Kidney (tissue), 22 donors: ENCODE measurements at regions of chr3 and their contacts with region 1.

Region 1: GRCh38 chr3:149519912-149520311 is 45.4 kb downstream of the TM4SF4 start:
- DNase-seq: no peak
- H3K4me3 ChIP-seq: no peak overlapping the region
- H3K27ac ChIP-seq: no peak overlapping the region
- H3K4me1 ChIP-seq: no peaks in the 10 kb centered on the region
- H3K27me3 ChIP-seq: no peaks in the 10 kb centered on the region
- CTCF ChIP-seq: no peak

Region 2: GRCh38 chr3:149723781-149724180 is 203.9 kb after region 1 on chr3:
- intact Hi-C with region 1: loop called (anchors 5 kb)
- DNase-seq: no peak
- H3K4me3 ChIP-seq: no peak overlapping the region
- H3K27ac ChIP-seq: no peak overlapping the region
- H3K4me1 ChIP-seq: no peaks in the 10 kb centered on the region
- H3K27me3 ChIP-seq: no peaks in the 10 kb centered on the region
- CTCF ChIP-seq: no peak

Region 3: DNA sequence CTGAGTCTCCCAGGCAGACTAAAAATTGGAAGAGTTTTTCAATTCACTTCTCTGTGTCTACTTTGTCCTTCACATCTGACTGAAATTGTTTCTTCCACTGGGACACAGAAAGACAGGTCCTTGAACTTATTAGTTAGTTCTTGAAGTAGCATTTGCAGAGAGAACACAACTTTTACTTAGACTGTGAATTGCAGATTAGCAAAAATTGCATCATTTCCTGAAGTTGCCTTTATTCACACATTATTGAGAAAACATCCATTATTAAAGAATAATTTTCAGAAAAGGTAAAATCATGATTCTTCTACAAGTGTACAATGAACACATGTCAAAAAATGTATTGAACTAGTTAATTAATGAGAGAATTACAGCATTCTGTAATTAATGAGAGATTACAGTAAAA is 233.8 kb after region 1 on chr3:
- intact Hi-C with region 1: no loop called
- DNase-seq: no peak
- H3K4me3 ChIP-seq: no peak overlapping the region
- H3K27ac ChIP-seq: no peak overlapping the region
- H3K4me1 ChIP-seq: peaks cover 0 to 7% (median 0%) of the 10 kb centered on the region in 3 donors
- H3K27me3 ChIP-seq: no peaks in the 10 kb centered on the region
- CTCF ChIP-seq: no peak

Region 4: DNA sequence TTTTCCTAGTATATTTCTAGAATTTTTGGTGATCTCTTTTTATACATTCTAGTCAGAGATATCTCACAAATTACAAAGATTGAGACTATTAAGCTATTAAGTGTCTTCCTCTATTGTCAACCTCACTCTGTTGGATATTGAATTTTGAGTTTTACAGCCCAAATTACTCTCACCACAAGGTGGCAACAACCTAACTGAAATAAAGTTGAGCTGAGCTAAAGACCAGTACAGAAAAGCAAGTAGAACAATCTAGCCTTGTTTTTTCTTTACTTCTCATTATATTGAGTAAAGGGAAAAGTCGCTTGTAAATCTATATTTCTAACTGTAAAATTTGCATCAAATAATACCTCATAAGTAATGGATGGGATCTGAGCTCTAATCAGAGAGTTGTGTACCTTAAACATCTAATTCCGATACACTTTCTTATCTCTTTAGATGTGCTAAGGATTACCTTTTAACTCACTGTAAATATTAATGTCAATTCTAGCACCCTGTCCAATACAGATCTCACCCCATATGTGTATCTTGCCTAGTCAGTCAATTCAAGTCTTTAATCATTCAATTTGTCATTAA is 245.9 kb after region 1 on chr3:
- intact Hi-C with region 1: no loop called
- DNase-seq: peak in 2 of 5 donors; percentile 29 to 41
- H3K4me3 ChIP-seq: no peak overlapping the region
- H3K27ac ChIP-seq: no peak overlapping the region
- H3K4me1 ChIP-seq: no peaks in the 10 kb centered on the region
- H3K27me3 ChIP-seq: peaks cover 4% of the 10 kb centered on the region
- CTCF ChIP-seq: peak; percentile 51

Region 5: DNA sequence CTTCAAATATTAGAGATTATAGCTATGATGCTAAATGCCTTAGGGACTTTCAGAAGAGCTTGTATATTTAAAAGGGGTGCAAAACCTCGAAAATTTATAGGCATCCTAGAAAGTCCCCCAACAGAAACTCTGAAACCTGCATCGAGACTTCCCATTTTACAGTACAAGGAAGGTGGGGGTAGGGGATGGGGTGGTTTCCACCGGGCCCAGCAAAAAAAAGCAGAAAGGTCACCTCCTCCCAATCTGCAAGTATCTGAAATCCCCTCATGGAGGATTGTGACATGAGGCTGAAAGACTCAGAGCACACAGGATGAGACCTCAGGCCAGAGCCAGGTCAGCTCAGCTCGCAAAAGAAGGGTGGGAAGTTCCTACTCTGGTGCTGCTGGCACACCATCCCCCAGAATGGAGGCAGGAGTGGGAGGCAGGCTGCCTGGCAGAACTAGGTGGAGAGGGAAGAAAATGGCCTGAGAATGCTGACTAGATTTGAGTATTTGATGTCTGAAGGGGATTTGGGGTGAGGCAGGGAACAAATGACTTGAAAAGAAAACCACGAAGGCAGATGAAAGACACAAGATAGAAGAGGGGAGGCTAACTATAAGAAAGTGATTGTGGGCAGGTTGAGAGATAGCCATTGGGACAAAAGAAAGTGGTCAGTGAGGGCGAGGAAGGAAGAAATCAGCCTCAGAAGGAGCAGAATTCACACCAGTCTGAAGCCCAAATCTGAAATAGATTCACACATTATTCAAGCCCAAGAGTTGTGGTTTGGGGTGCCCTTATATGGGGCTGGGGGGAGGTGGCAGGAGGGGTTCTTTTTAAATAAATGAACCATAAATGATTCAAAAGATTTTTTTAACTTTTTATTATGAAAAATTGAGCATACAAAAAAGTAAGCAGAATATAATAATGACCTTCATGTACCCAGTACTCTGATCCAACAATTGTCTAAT is 865.7 kb after region 1 on chr3:
- intact Hi-C with region 1: no loop called
- DNase-seq: no peak
- H3K4me3 ChIP-seq: no peak overlapping the region
- H3K27ac ChIP-seq: no peak overlapping the region
- H3K4me1 ChIP-seq: no peaks in the 10 kb centered on the region
- H3K27me3 ChIP-seq: no peaks in the 10 kb centered on the region
- CTCF ChIP-seq: no peak